Activated CD8-positive, alpha-beta T cell treated with anti-CD3 and anti-CD28 coated beads for 36 hours (primary cell): ENCODE measurements at regions of chr11 and their contacts with region 1.

Region 1: GRCh38 chr11:128552783-128553661 is 34.3 kb downstream of the ETS1 start:
- DNase-seq: peak; percentile 41
- ATAC-seq: peak; percentile 8
- H3K4me3 Mint-ChIP-seq: peak overlapping the region; percentile 31
- H3K27ac Mint-ChIP-seq: peak overlapping the region; percentile 89
- H3K4me1 Mint-ChIP-seq: peaks cover 59% of the 10 kb centered on the region
- H3K27me3 Mint-ChIP-seq: no peaks in the 10 kb centered on the region
- CTCF ChIP-seq: no peak

Region 2: DNA sequence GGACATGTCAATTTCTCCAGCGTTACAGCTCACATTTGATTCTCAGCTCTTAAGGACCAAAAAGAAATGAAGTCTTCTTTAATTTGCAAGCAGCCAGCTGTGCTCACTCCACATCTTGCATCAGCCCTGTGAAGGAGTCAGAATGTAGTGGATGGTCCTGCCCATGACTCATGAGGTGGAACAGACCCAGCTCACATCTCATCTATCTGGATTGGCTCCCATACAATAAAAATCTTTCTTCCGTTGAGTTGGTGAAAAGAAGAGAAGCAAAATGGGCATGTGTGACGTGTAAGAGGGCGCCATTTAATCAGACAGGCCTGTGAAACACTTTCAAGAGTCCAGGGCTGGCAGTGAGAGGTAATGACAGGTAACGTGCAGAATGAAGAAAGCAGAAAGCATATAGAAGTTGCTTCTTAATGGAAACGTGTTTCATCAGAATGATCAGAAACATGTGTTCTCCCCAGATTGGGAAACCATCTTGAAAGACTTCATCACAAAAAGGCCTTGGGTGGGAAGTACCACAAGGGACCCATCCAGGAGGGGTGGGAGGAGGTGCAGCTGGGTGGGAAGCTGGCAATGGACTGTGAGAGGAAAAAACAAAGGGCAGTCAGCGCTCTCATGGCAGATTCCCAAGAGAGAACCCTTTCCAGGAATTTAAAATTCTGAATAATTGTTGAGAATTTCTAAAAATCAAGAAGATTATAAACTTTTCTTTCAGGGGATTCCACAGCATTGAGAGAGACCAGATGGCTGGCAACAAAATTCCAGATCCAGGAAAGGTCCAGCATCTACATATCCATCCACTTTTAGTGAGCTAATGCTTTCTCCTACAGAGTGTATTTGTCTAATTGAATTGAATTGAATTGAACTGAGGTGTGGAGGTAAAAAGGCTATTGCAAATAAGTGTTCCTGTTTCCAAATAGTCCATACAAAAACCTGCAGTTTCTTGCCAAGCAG is 22.6 kb before region 1 on chr11:
- CTCF ChIA-PET with region 1: interaction called, 19 read pairs
- POLR2A ChIA-PET with region 1: interaction called, 18 read pairs
- intact Hi-C with region 1: loop called (anchors 2 kb)
- DNase-seq: peak; percentile 33
- ATAC-seq: no peak
- H3K4me3 Mint-ChIP-seq: no peak overlapping the region
- H3K27ac Mint-ChIP-seq: peak overlapping the region; percentile 26
- H3K4me1 Mint-ChIP-seq: peaks cover 59% of the 10 kb centered on the region
- H3K27me3 Mint-ChIP-seq: no peaks in the 10 kb centered on the region
- CTCF ChIP-seq: no peak

Region 3: GRCh38 chr11:128582496-128583366 is 29.7 kb after region 1 on chr11:
- CTCF ChIA-PET with region 1: interaction called, 6 read pairs
- POLR2A ChIA-PET with region 1: no interaction called
- intact Hi-C with region 1: loop called (anchors 2 kb)
- DNase-seq: peak; percentile 35
- ATAC-seq: no peak
- H3K4me3 Mint-ChIP-seq: peak overlapping the region; percentile 55
- H3K27ac Mint-ChIP-seq: peak overlapping the region; percentile 72
- H3K4me1 Mint-ChIP-seq: peaks cover 47% of the 10 kb centered on the region
- H3K27me3 Mint-ChIP-seq: no peaks in the 10 kb centered on the region
- CTCF ChIP-seq: no peak